ENCODE measurements at regions of chr1 and their contacts with region 1.

Region 1: GRCh38 chr1:70487910-70488665 is 77.0 kb downstream of the CTH start:
- DNase-seq: peak; percentile 51
- H3K4me3 ChIP-seq: no peak overlapping the region
- H3K27ac ChIP-seq: no peak overlapping the region
- H3K4me1 ChIP-seq: no peaks in the 10 kb centered on the region
- H3K27me3 ChIP-seq: no peaks in the 10 kb centered on the region
- CTCF ChIP-seq: peak; percentile 63 to 81
- POLR2A ChIP-seq: no peak

Region 2: DNA sequence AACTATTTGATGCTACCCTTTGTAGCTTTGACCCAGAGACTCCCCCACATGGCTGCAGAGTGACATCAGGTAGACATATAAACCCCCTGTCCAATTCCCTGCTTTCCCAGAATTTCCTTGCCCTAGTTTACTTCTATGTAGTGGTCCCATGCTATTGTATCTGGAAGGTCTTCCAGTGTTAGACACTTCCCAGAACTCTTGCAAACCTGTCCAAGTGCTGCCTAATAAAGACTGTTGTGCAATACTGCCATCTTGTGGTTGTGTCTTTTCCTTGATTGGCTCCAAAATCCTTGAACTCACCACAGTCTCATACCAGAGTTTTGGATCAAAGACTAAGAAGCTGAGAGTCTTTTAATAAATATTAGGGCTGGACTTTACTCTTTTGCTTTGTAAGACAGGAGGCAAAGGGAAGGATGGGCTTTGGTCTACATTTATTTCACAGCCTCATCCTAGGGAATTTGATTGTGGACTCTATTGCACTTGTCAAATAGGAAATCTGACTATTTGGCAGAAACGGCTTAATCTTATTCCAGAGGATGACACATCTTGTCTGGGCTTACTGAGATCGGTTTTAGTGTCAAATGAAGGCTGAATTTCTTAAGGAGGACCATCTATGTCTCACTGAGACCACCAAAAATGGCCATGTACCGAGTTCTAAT is 750.4 kb before region 1 on chr1:
- CTCF ChIA-PET with region 1: interaction called, 11 read pairs
- POLR2A ChIA-PET with region 1: no interaction called
- dilution Hi-C with region 1: no loop called
- intact Hi-C with region 1: no loop called
- DNase-seq: peak; percentile 70
- H3K4me3 ChIP-seq: no peak overlapping the region
- H3K27ac ChIP-seq: no peak overlapping the region
- H3K4me1 ChIP-seq: no peaks in the 10 kb centered on the region
- H3K27me3 ChIP-seq: no peaks in the 10 kb centered on the region
- CTCF ChIP-seq: peak; percentile 59 to 61
- POLR2A ChIP-seq: no peak

Region 3: DNA sequence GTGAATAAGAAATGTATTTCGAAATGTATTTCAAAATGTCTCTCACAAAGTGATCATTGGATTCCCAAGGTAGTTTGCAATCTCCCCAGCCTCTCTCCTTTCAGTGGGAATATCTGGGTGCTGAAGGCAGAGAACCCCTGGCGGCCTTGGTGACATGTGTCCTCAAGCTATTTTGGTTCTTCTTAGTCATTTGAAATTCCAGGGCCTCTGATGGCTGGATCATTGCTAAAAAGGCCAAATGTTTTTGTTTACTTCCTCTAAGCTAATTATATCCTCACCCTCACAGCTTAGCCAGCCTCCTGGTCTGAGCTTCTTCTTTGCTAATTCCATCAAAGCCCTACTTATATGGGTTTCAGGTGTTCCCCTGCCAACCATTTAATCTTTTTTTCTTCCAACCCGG is 353.9 kb before region 1 on chr1:
- CTCF ChIA-PET with region 1: interaction called, 13 read pairs
- POLR2A ChIA-PET with region 1: no interaction called
- dilution Hi-C with region 1: no loop called
- intact Hi-C with region 1: loop called (anchors 1 kb)
- DNase-seq: no peak
- H3K4me3 ChIP-seq: no peak overlapping the region
- H3K27ac ChIP-seq: no peak overlapping the region
- H3K4me1 ChIP-seq: no peaks in the 10 kb centered on the region
- H3K27me3 ChIP-seq: no peaks in the 10 kb centered on the region
- CTCF ChIP-seq: no peak
- POLR2A ChIP-seq: no peak

Region 4: GRCh38 chr1:70247768-70248167 is 240.3 kb before region 1 on chr1:
- CTCF ChIA-PET with region 1: no interaction called
- POLR2A ChIA-PET with region 1: no interaction called
- dilution Hi-C with region 1: no loop called
- intact Hi-C with region 1: loop called (anchors 5 kb)
- DNase-seq: no peak
- H3K4me3 ChIP-seq: no peak overlapping the region
- H3K27ac ChIP-seq: no peak overlapping the region
- H3K4me1 ChIP-seq: no peaks in the 10 kb centered on the region
- H3K27me3 ChIP-seq: no peaks in the 10 kb centered on the region
- CTCF ChIP-seq: no peak
- POLR2A ChIP-seq: no peak

Region 5: DNA sequence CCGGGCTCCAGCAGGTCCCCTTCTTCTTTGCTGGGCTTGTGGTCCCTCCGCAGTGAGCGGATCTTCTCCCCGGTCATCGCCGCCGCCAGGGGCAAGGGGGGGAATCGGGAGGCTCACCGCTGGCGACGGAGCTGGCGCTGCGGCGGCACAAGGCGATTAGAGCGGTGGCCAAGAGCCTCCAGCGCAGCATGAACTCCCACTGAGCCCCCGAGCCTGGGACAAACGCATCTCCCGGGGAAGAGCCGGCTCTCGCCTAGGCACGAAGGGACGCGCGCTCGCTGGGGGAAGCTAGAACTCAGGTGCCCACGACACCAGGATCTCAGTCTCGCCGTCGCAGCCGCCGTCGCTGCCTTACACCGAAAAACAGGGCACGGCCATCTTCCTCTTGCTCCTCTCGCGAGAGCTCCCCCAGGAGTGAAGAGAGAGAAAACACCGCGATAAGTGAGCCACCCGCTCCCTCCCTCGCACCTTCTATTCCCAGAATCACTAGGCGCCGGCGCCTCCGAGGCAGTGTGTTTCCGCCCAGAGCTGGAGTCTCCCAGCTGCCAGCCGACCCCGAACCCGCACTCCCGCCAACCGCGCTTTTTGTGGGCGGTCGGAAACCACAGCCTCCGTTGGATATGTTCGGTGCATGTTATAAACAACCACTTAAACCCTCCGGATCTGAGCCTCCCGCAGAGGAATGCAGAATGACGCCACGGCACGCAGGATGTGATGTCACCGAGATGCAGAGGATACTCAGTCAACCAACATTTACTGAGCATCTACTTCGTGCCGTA is 133.6 kb before region 1 on chr1 and contains the start of gene ANKRD13C:
- CTCF ChIA-PET with region 1: no interaction called
- POLR2A ChIA-PET with region 1: no interaction called
- dilution Hi-C with region 1: no loop called
- intact Hi-C with region 1: loop called (anchors 2 kb)
- DNase-seq: peak; percentile 97
- H3K4me3 ChIP-seq: peak within 1 kb of the TSS; percentile 61 to 83 (median 83)
- H3K27ac ChIP-seq: peak within 1 kb of the TSS; percentile 83
- H3K4me1 ChIP-seq: peaks cover 11% of the 10 kb centered on the region
- H3K27me3 ChIP-seq: no peaks in the 10 kb centered on the region
- CTCF ChIP-seq: peak in 1 of 2 donors; percentile 16
- POLR2A ChIP-seq: peak; percentile 84
- total RNA-seq, gene ANKRD13C: 17.3 and 17.6 TPM in 2 replicates

Region 6: DNA sequence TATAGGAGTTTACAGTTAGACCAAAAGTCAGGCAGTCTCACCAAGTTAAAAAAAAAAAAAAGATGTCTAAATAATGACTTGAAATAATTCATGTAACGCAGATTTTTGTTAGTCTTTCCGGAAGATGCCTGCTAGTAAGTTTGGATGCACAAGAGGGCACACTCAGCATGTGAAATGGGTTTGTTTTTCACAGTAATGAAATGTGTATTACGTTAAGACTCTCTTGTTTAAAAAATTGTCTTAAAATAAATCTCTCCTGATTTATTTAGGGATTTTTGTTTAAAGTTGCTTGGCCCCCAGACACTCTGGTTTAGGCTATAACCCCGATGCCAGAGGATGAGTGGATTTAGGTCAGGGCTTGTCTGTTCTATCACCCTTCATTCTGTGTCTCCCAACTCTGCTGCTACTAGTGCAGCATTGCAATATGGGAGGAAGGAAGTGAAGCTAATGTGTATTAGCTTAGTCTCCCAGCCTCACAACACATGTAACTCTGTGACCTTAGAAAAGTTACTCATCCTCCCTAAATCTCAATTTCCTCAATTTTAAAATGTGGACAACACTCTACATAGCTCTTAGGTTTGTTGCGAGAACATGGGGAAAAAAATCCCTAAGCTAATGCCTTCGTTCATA is 51.4 kb before region 1 on chr1:
- CTCF ChIA-PET with region 1: interaction called, 18 read pairs
- POLR2A ChIA-PET with region 1: no interaction called
- dilution Hi-C with region 1: no loop called
- intact Hi-C with region 1: loop called (anchors 1 kb)
- DNase-seq: peak; percentile 21
- H3K4me3 ChIP-seq: no peak overlapping the region
- H3K27ac ChIP-seq: no peak overlapping the region
- H3K4me1 ChIP-seq: peaks cover 11% of the 10 kb centered on the region
- H3K27me3 ChIP-seq: no peaks in the 10 kb centered on the region
- CTCF ChIP-seq: no peak
- POLR2A ChIP-seq: no peak

Measured in endothelial cell of umbilical vein (primary cell).